ENCODE measurements at regions of chr4 and their contacts with region 1.

Region 1: GRCh38 chr4:164070625-164071024 is 576.1 kb downstream of the TMA16 start:
- DNase-seq: no peak
- ATAC-seq: no peak
- H3K4me3 ChIP-seq: no peak overlapping the region
- H3K27ac ChIP-seq: no peak overlapping the region
- H3K4me1 ChIP-seq: no peaks in the 10 kb centered on the region
- H3K27me3 ChIP-seq: no peaks in the 10 kb centered on the region
- CTCF ChIP-seq: no peak
- POLR2A ChIP-seq: no peak
- RAD21 ChIP-seq: no peak

Region 2: GRCh38 chr4:164337219-164337944 is 266.8 kb after region 1 on chr4:
- CTCF ChIA-PET with region 1: no interaction called
- POLR2A ChIA-PET with region 1: no interaction called
- RAD21 ChIA-PET with region 1: no interaction called
- intact Hi-C with region 1: no loop called
- DNase-seq: no peak
- ATAC-seq: peak; percentile 60
- H3K4me3 ChIP-seq: no peak overlapping the region
- H3K27ac ChIP-seq: no peak overlapping the region
- H3K4me1 ChIP-seq: no peaks in the 10 kb centered on the region
- H3K27me3 ChIP-seq: no peaks in the 10 kb centered on the region
- CTCF ChIP-seq: 0 out of 6 replicates have a peak, but pooled peaks of 1 of the 3 experiments have one; percentile 1
- POLR2A ChIP-seq: no peak
- RAD21 ChIP-seq: no peak

Region 3: DNA sequence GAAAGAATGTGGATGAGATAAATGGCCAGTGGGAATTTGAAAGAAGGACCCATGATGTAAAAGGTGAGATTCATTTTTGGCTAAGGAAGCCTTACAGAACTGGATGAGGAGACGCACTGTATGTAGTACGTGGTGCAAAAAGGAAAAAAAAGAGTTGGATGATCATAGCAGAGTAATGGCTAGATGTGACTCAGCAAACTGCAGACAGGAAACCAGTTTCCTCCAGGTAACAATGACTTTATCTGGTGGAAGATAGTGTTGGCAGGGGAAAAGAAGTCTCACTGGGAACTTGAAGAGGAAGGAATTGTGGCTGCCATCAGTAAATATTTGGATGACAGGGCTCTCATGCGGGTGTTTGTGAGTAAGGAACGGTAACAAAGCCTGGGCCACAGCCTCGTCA is 1551.4 kb after region 1 on chr4:
- CTCF ChIA-PET with region 1: no interaction called
- POLR2A ChIA-PET with region 1: no interaction called
- RAD21 ChIA-PET with region 1: no interaction called
- intact Hi-C with region 1: loop called (anchors 10 kb)
- DNase-seq: no peak
- ATAC-seq: no peak
- H3K4me3 ChIP-seq: no peak overlapping the region
- H3K27ac ChIP-seq: no peak overlapping the region
- H3K4me1 ChIP-seq: no peaks in the 10 kb centered on the region; a peak in 1 of 4 replicates
- H3K27me3 ChIP-seq: no peaks in the 10 kb centered on the region
- CTCF ChIP-seq: no peak
- POLR2A ChIP-seq: no peak
- RAD21 ChIP-seq: no peak

Measured in HCT116 (cell line).